GM10248 (cell line): ENCODE measurements at regions of chr15 and their contacts with region 1.

Region 1: DNA sequence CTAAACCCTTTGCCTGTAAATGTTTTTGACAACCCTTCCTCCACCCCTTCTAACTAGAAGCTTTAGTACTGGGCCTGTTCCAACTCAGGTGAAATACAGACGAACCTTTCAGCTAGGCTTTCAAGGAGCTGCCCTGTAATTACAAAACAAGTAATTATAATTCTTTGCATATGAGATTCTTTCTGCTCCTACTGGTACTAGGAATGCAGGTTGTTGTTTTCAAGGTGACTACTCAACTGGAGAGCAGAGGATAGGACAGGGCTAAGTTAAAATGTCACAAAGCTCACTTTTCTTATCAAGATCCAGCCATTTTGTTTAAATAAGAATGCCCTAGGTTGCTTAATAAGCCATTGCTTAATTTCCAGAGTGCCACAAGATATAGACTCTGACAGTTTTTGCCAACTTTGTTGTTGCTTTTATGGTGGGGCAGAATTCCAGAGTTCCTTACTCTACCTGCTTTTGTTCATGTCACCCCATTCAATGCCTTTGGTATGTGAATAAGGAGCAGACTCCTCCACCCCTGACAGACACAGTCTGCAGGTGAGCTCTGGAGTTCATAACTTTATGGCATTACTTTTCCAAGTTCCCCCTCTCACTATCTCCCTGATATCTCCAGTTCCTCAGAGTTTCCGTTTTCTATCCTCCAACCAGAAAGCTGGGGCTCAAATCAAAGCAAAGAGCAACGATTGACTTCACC is 22.9 kb upstream of the MTMR10 start:
- DNase-seq: no peak
- CTCF ChIP-seq: no peak

Region 2: GRCh38 chr15:31004220-31004733 is 10.1 kb before region 1 on chr15:
- CTCF ChIA-PET with region 1: interaction called, 12 read pairs
- POLR2A ChIA-PET with region 1: no interaction called
- DNase-seq: peak; percentile 68
- CTCF ChIP-seq: no peak